Activated B cell treated with CpG ODN at 0.5 μM for 24 hours (primary cell): ENCODE measurements at regions of chr11 and their contacts with region 1.

Region 1: DNA sequence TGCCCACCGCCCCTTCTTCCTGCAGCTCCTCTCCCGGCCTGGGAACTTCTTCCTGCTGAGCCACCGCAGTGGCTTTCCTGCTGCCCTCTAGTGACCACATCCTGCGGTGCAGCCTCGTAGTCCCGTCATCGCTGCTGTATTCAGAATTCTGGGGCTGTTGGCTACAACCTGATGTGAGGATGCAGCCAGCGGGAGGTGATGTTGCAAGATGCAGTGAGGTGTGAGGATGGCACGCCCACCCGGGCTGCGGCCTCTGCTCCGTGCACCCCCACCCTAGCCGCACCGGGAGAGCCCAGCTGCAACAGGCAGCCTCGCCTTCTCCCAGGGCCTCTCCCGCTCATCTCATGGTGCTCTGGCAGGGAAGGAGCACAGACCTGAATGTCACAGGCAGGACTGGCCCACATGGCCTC is 10.1 kb downstream of the CHST1 start:
- DNase-seq: peak; percentile 44
- ATAC-seq: peak; percentile 56
- H3K4me3 Mint-ChIP-seq: no peak overlapping the region
- H3K27ac Mint-ChIP-seq: no peak overlapping the region
- H3K4me1 Mint-ChIP-seq: peaks cover 3% of the 10 kb centered on the region
- H3K27me3 Mint-ChIP-seq: peaks cover 32% of the 10 kb centered on the region
- CTCF ChIP-seq: no peak

Region 2: DNA sequence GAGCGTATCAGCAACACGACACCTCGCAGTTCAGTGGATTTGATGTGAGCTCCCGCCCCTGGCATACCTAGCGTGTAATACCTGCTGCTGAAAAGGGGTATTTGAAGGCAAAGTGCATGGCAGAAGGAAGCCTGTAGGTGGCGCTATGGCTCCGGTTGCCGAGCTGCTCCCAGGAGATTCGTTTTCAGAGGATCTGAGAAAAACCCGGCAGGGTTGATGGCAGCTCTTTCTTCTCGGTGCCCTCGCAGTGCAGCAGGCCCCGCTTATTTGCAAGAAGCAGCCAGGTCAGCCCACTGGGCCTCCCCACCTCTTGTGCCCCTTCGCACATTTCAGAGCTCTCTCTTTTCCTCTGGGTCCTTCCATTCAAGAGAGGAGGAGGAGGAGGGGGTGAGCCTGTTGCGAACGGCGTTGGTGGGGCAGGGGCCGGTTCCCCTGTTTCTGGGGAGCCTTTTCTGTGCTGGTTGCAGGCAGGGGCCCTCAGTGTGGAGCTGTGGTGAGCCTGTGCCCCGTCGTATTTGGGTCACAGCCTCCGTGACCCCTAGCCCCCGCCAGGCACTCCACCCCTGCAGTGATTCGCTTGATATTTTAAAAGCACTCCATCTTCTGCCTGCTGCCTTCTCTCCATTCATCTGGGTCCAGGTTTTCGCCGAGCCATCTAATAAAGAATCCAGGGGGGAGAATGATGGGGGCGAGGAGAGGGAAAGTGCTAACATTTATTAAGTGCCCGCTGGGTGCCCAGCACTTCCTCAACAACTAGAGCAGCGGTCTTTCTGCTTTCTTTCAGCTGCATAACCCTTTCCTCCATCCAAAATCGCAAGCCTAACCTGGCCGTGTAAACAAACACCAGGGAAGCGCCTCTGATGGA is 283.9 kb before region 1 on chr11:
- CTCF ChIA-PET with region 1: interaction called, 32 read pairs
- POLR2A ChIA-PET with region 1: no interaction called
- intact Hi-C with region 1: no loop called
- DNase-seq: peak; percentile 47
- ATAC-seq: peak; percentile 70
- H3K4me3 Mint-ChIP-seq: peak overlapping the region; percentile 16
- H3K27ac Mint-ChIP-seq: no peak overlapping the region
- H3K4me1 Mint-ChIP-seq: peaks cover 20% of the 10 kb centered on the region
- H3K27me3 Mint-ChIP-seq: peaks cover 53% of the 10 kb centered on the region
- CTCF ChIP-seq: peak; percentile 36

Region 3: GRCh38 chr11:45617871-45618601 is 37.3 kb before region 1 on chr11:
- CTCF ChIA-PET with region 1: no interaction called
- POLR2A ChIA-PET with region 1: no interaction called
- intact Hi-C with region 1: no loop called
- DNase-seq: no peak
- ATAC-seq: no peak
- H3K4me3 Mint-ChIP-seq: no peak overlapping the region
- H3K27ac Mint-ChIP-seq: no peak overlapping the region
- H3K4me1 Mint-ChIP-seq: no peaks in the 10 kb centered on the region
- H3K27me3 Mint-ChIP-seq: peaks cover 5% of the 10 kb centered on the region
- CTCF ChIP-seq: no peak

Region 4: GRCh38 chr11:45754261-45754709 is 98.9 kb after region 1 on chr11:
- CTCF ChIA-PET with region 1: no interaction called
- POLR2A ChIA-PET with region 1: no interaction called
- intact Hi-C with region 1: no loop called
- DNase-seq: no peak
- ATAC-seq: no peak
- H3K4me3 Mint-ChIP-seq: no peak overlapping the region
- H3K27ac Mint-ChIP-seq: no peak overlapping the region
- H3K4me1 Mint-ChIP-seq: no peaks in the 10 kb centered on the region
- H3K27me3 Mint-ChIP-seq: peaks cover 47% of the 10 kb centered on the region
- CTCF ChIP-seq: no peak